ENCODE measurements at regions of chr13 and their contacts with region 1.

Region 1: DNA sequence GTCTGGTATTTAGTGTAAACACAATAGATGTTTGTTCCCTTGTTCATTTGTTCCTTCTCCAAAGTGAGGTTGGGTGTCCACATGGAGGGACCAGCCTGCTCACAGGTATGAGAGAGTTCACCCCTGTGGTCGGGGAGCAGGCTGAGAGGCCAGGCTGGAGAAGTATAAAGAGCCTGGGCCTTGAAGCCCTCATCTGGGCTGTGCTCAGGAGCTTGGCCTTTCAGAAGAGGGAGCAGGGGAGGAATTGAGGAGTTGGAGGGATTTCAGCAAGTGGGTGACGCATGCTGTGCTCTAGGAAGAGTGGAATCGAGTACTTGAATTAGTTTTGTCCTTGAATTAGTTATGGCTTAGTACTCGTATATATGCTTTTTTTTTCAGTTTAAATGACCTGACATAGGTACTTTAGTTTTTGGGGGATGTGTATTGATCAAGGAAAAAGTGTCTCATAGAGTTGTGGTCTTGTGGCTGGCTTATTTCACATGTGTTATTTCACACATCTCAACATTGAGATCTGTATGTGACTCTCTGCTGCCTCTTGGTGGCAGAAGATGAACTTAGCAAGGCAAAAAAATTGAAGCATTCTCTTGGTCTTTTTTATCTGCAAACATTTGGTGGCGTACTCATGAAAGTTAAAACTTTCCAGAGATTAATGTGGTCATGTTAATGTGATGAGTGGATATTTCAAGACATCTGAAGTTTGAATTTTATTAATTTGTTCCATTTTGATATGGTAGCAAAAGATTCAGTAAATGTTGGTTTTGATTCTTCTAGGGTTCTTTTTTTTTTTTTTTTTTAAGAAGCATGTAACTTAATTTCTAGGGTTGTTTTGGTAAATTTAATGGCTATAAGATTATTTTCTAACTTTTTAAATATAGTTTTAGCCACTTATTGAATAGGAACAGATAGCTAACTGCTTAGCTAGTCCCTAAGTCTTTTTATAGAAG is 54.3 kb downstream of the SLAIN1 start:
- H3K4me3 ChIP-seq: no peak overlapping the region
- H3K27ac ChIP-seq: no peak overlapping the region
- H3K4me1 ChIP-seq: no peaks in the 10 kb centered on the region
- CTCF ChIP-seq: no peak

Region 2: DNA sequence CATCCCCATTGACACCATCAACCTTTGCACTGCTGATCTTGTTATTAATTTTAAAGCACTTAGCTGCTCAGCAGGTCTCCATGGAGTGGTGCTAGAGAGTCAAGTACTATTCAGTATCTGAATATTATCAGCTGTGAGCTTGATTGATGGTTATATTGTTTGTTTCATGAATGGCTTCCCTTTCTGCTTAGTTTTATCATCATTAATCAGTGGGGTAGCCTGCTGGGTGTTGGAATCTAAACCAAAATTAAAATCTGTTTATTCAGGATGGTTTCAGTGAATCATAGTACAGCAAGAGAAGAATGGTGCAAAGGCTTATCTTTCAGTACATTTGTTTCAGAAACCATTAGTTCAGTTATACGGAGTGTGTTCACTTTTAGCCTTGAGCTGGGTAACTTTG is 258.8 kb before region 1 on chr13:
- CTCF ChIA-PET with region 1: interaction called, 12 read pairs
- POLR2A ChIA-PET with region 1: no interaction called
- H3K4me3 ChIP-seq: no peak overlapping the region
- H3K27ac ChIP-seq: no peak overlapping the region
- H3K4me1 ChIP-seq: no peaks in the 10 kb centered on the region
- CTCF ChIP-seq: no peak

Region 3: GRCh38 chr13:77595166-77595810 is 156.5 kb before region 1 on chr13:
- CTCF ChIA-PET with region 1: interaction called, 22 read pairs
- POLR2A ChIA-PET with region 1: no interaction called
- H3K4me3 ChIP-seq: no peak overlapping the region
- H3K27ac ChIP-seq: no peak overlapping the region
- H3K4me1 ChIP-seq: no peaks in the 10 kb centered on the region
- CTCF ChIP-seq: no peak

Region 4: GRCh38 chr13:77975393-77976067 is 223.7 kb after region 1 on chr13:
- CTCF ChIA-PET with region 1: no interaction called
- POLR2A ChIA-PET with region 1: no interaction called
- H3K4me3 ChIP-seq: no peak overlapping the region
- H3K27ac ChIP-seq: no peak overlapping the region
- H3K4me1 ChIP-seq: no peaks in the 10 kb centered on the region
- CTCF ChIP-seq: no peak

Measured in HEK293 (cell line).